Left ventricle myocardium inferior (tissue), 1 donor: ENCODE measurements at regions of chr2 and their contacts with region 1.

Region 1: DNA sequence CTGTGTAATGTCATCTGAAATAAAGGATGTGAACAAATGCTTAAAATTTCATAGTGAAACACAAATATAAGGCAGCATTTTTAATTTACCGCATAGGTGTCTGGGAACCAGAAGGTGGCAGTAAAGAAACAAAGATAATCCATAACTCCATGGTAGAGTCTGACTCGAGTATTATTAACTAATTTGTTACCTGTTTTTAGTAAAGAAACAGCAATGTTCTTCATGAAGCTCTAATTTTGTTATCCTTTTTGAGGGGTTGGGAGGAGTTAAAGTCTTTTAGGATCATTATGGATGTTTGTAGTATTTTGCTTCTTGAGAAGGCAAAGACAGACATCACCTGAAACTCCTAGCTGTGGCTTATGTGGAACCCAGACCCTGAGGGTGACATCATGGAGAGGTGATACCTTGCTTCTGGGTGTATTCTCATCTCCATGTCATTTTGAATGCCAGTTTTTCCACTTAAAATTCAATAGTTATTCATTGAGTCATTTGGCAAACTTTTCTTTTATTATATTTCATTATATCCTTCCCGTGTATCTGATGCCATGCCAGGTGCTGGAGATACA is 286.2 kb upstream of the EPAS1 start:
- DNase-seq: no peak
- H3K4me3 ChIP-seq: no peak overlapping the region
- H3K27ac ChIP-seq: no peak overlapping the region
- H3K4me1 ChIP-seq: peaks cover 16% of the 10 kb centered on the region
- H3K27me3 ChIP-seq: no peaks in the 10 kb centered on the region
- CTCF ChIP-seq: peak; percentile 75

Region 2: DNA sequence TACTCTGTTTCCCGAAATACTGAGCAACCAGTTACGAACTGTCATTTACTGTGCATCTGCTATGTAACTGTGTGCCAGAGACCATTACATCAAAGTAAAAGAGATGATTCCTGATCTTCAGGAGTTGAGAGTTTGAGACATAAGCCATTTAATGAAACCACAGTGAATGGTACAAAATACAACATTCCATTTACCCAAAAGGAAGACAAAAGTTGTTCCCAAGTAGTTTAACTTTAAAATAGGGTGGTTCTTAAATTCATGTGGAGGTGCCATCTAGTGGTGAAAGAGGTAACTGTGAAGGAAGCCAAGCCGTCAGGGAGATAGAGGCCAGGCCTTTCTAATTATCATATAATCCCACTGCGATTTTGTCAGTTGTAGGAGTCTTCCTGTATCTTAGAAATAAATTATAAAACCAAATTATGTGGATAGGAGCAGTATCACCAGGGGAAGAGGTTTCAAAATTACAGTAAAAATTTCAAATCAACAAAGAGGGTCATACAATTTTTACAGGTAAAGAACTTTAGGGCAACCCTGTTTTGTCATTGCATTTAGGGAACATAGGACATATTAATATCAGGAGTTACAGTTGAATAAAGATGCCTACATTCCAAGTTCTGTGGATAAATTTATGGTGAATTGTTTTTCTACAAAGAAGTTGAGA is 353.9 kb after region 1 on chr2:
- intact Hi-C with region 1: loop called (anchors 10 kb)
- DNase-seq: no peak
- H3K4me3 ChIP-seq: no peak overlapping the region
- H3K27ac ChIP-seq: peak overlapping the region; percentile 29
- H3K4me1 ChIP-seq: peaks cover 68% of the 10 kb centered on the region
- H3K27me3 ChIP-seq: no peaks in the 10 kb centered on the region
- CTCF ChIP-seq: peak; percentile 91